GM12878 (cell line): ENCODE measurements at regions of chr1 and their contacts with region 1.

Region 1: GRCh38 chr1:163935738-163936374 is 614.1 kb downstream of the NUF2 start:
- DNase-seq: no peak
- ATAC-seq: no peak
- H3K4me3 ChIP-seq: no peak overlapping the region
- H3K27ac ChIP-seq: no peak overlapping the region
- H3K4me1 ChIP-seq: no peaks in the 10 kb centered on the region
- H3K27me3 ChIP-seq: no peaks in the 10 kb centered on the region
- CTCF ChIP-seq: no peak
- EP300 ChIP-seq: no peak
- POLR2A ChIP-seq: no peak
- RAD21 ChIP-seq: no peak

Region 2: GRCh38 chr1:163885510-163885909 is 50.3 kb before region 1 on chr1:
- CTCF ChIA-PET with region 1: no interaction called
- POLR2A ChIA-PET with region 1: no interaction called
- RAD21 ChIA-PET with region 1: no interaction called
- SMC1A ChIA-PET with region 1: no interaction called
- in situ Hi-C with region 1: no loop called
- intact Hi-C with region 1: loop called (anchors 10 kb)
- DNase-seq: no peak
- ATAC-seq: no peak
- H3K4me3 ChIP-seq: no peak overlapping the region
- H3K27ac ChIP-seq: no peak overlapping the region
- H3K4me1 ChIP-seq: no peaks in the 10 kb centered on the region
- H3K27me3 ChIP-seq: no peaks in the 10 kb centered on the region
- CTCF ChIP-seq: no peak
- EP300 ChIP-seq: no peak
- POLR2A ChIP-seq: no peak
- RAD21 ChIP-seq: no peak